Breast epithelium (tissue), 4 donors: ENCODE measurements at regions of chr15 and their contacts with region 1.

Region 1: GRCh38 chr15:49898575-49899283 is 220.3 kb downstream of the ATP8B4 start:
- DNase-seq: no peak
- H3K4me3 ChIP-seq: no peak overlapping the region
- H3K27ac ChIP-seq: peak overlapping the region; percentile 48 to 79
- H3K4me1 ChIP-seq: peaks cover 11 to 12% of the 10 kb centered on the region in 2 donors
- H3K27me3 ChIP-seq: no peaks in the 10 kb centered on the region
- CTCF ChIP-seq: no peak
- POLR2A ChIP-seq: no peak

Region 2: DNA sequence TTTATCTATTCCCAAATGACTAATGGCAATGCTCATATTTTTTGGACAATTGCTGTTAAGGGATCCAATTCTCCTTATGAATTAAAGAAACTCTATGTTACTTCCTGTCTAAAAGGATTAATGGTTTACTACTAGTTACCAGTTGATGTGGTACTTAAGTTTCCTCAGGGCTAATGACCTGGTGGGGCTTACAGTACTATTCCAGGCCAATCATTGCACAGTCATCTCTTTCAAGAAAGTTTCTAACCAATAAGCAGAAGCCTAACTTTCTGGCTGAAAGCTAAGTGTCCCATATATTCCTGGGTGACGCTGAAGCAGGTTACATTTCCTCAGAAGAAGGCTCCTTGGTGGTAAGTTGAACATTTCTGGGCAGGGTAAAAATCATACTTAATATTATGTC is 1692.7 kb before region 1 on chr15 and contains the start of gene SLC12A1:
- intact Hi-C with region 1: no loop called
- DNase-seq: no peak
- H3K4me3 ChIP-seq: no peak within 1 kb of the TSS
- H3K27ac ChIP-seq: no peak within 1 kb of the TSS
- H3K4me1 ChIP-seq: no peaks in the 10 kb centered on the region
- H3K27me3 ChIP-seq: no peaks in the 10 kb centered on the region
- CTCF ChIP-seq: no peak
- POLR2A ChIP-seq: no peak
- total RNA-seq, gene SLC12A1: under 0.01 TPM in 1 of 3 donors, not detected in the others

Region 3: GRCh38 chr15:48250640-48251076 is 1648.1 kb before region 1 on chr15:
- intact Hi-C with region 1: no loop called
- DNase-seq: no peak
- H3K4me3 ChIP-seq: no peak overlapping the region
- H3K27ac ChIP-seq: no peak overlapping the region
- H3K4me1 ChIP-seq: no peaks in the 10 kb centered on the region
- H3K27me3 ChIP-seq: no peaks in the 10 kb centered on the region
- CTCF ChIP-seq: peak in 2 of 3 donors; percentile 58 to 64
- POLR2A ChIP-seq: no peak

Region 4: GRCh38 chr15:49492824-49493223 is 405.9 kb before region 1 on chr15:
- intact Hi-C with region 1: no loop called
- DNase-seq: no peak
- H3K4me3 ChIP-seq: no peak overlapping the region
- H3K27ac ChIP-seq: no peak overlapping the region
- H3K4me1 ChIP-seq: no peaks in the 10 kb centered on the region
- H3K27me3 ChIP-seq: no peaks in the 10 kb centered on the region
- CTCF ChIP-seq: no peak
- POLR2A ChIP-seq: no peak

Region 5: GRCh38 chr15:49934488-49934887 is 35.8 kb after region 1 on chr15:
- intact Hi-C with region 1: loop called (anchors 2 kb)
- DNase-seq: no peak
- H3K4me3 ChIP-seq: no peak overlapping the region
- H3K27ac ChIP-seq: no peak overlapping the region
- H3K4me1 ChIP-seq: no peaks in the 10 kb centered on the region
- H3K27me3 ChIP-seq: no peaks in the 10 kb centered on the region
- CTCF ChIP-seq: no peak
- POLR2A ChIP-seq: no peak

Region 6: DNA sequence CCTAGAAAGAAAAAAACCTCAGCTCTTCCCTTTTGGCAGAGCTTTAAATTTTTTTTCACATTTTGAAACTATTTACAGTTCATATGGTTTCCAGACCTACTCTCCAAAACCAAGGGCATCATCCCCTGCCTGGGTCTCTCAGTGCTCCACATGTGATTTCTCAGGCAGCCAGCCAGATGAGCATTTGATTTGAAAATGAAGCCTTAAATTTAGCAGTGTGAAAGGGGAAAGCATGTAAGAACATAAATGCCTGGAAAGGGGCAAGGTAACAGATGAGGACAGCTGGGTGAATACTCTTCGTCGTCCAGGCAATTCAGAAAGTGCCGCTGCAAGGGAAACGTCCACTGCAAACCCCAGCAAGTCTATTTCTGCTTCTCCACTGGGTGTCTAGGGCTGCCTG is 125.6 kb after region 1 on chr15:
- intact Hi-C with region 1: no loop called
- DNase-seq: no peak
- H3K4me3 ChIP-seq: no peak overlapping the region
- H3K27ac ChIP-seq: no peak overlapping the region
- H3K4me1 ChIP-seq: no peaks in the 10 kb centered on the region
- H3K27me3 ChIP-seq: no peaks in the 10 kb centered on the region
- CTCF ChIP-seq: no peak
- POLR2A ChIP-seq: no peak